OCI-LY7 (cell line): ENCODE measurements at regions of chr2 and their contacts with region 1.

Region 1: DNA sequence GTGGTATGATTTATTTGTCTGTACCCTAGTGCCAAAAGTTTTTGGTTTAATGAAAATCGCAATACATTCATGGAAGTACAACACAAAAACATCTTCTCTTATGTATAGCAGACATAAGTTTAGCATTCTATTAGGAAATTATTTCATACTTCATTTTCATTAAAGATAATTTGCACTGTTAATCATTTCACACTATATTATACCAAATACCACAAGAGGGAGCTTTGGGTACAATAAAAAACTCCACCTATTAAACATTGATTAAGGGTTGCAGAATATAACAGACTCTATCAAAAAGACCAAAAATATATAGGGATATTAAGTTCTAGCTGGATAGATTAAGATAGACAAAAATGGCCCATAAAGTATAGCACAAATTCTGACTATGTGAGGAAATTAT is 79.0 kb downstream of the SLC66A3 start:
- DNase-seq: peak; percentile 20
- H3K4me3 ChIP-seq: no peak overlapping the region
- H3K27ac ChIP-seq: no peak overlapping the region
- H3K4me1 ChIP-seq: peaks cover 12% of the 10 kb centered on the region
- CTCF ChIP-seq: peak; percentile 92

Region 2: GRCh38 chr2:11411768-11412448 is 177.6 kb after region 1 on chr2:
- CTCF ChIA-PET with region 1: no interaction called
- POLR2A ChIA-PET with region 1: no interaction called
- intact Hi-C with region 1: loop called (anchors 1 kb)
- DNase-seq: peak; percentile 39
- H3K4me3 ChIP-seq: peak overlapping the region; percentile 34
- H3K27ac ChIP-seq: no peak overlapping the region
- H3K4me1 ChIP-seq: peaks cover 6% of the 10 kb centered on the region
- CTCF ChIP-seq: peak; percentile 82

Region 3: DNA sequence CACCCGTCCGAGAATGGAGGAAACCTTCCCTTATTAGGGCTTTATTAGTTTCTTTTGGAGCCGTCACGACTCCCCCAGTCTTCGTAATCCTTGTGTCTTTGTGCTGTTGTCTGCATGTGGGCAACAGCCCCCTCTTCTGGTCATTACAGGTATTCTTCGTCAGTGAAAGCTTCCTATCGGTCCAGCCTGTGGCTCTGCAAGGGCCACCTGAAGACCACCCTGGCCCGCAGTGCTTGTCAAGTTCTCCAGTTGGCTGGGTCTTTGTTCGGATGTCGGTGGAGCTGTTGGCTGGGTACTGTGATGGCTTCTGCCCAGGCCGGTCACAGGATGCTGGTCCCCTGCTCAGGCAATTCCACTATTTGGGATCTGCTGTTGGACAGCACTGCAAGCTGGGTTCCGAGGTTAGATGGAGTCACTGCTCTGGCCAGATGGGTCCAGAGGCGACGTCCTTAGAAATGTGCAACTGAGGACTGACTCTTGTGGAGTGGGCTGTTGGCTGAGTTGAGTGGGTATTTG is 212.5 kb after region 1 on chr2:
- CTCF ChIA-PET with region 1: no interaction called
- POLR2A ChIA-PET with region 1: interaction called, 3 read pairs
- intact Hi-C with region 1: loop called (anchors 1 kb)
- DNase-seq: peak; percentile 57
- H3K4me3 ChIP-seq: no peak overlapping the region
- H3K27ac ChIP-seq: no peak overlapping the region
- H3K4me1 ChIP-seq: no peaks in the 10 kb centered on the region
- CTCF ChIP-seq: peak; percentile 92

Region 4: GRCh38 chr2:11583840-11584524 is 349.7 kb after region 1 on chr2:
- CTCF ChIA-PET with region 1: no interaction called
- POLR2A ChIA-PET with region 1: no interaction called
- intact Hi-C with region 1: loop called (anchors 10 kb)
- DNase-seq: peak; percentile 59
- H3K4me3 ChIP-seq: no peak overlapping the region
- H3K27ac ChIP-seq: no peak overlapping the region
- H3K4me1 ChIP-seq: no peaks in the 10 kb centered on the region
- CTCF ChIP-seq: peak; percentile 94